H1 (cell line): ENCODE measurements at regions of chr15 and their contacts with region 1.

Region 1: DNA sequence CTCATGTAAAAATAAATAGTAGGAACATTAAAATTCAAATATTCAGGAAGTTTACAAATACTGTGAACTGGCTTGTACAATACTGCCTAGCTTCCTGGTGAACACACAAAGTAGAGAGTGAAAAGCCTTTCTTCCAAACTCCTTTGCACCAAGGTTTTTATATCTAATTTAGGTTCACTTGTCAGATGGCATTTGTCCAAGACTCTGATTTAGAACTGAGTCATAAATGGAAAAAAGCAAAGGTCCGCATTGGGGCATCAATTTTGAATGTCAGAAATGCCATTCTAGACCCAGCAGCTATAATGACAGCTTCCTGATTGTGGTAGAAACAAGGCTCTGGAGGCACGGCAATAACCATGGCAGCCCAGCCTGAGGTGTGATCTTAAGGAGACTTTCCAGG is 160.7 kb downstream of the PDE8A start:
- DNase-seq: no peak
- H3K4me3 ChIP-seq: no peak overlapping the region
- H3K27ac ChIP-seq: no peak overlapping the region
- H3K4me1 ChIP-seq: peaks cover 0 to 4% (median 0%) of the 10 kb centered on the region in 4 experiments; a peak in 1 of 7 replicates
- H3K27me3 ChIP-seq: no peaks in the 10 kb centered on the region
- CTCF ChIP-seq: no peak
- EP300 ChIP-seq: no peak
- POLR2A ChIP-seq: no peak
- RAD21 ChIP-seq: no peak

Region 2: GRCh38 chr15:85168642-85169173 is 26.4 kb after region 1 on chr15:
- CTCF ChIA-PET with region 1: interaction called, 10 read pairs
- POLR2A ChIA-PET with region 1: no interaction called
- DNase-seq: peak; percentile 72 to 82
- H3K4me3 ChIP-seq: peak overlapping the region; percentile 28 to 55 (median 36); a peak in 6 of 8 replicates
- H3K27ac ChIP-seq: no peak overlapping the region
- H3K4me1 ChIP-seq: no peaks in the 10 kb centered on the region
- H3K27me3 ChIP-seq: no peaks in the 10 kb centered on the region
- CTCF ChIP-seq: peak; percentile 39 to 56 (median 48)
- EP300 ChIP-seq: no peak
- POLR2A ChIP-seq: no peak
- RAD21 ChIP-seq: peak; percentile 62 to 67

Region 3: GRCh38 chr15:85179700-85180099 is 37.4 kb after region 1 on chr15:
- CTCF ChIA-PET with region 1: no interaction called
- POLR2A ChIA-PET with region 1: no interaction called
- DNase-seq: no peak
- H3K4me3 ChIP-seq: no peak overlapping the region
- H3K27ac ChIP-seq: no peak overlapping the region
- H3K4me1 ChIP-seq: no peaks in the 10 kb centered on the region
- H3K27me3 ChIP-seq: no peaks in the 10 kb centered on the region
- CTCF ChIP-seq: no peak
- EP300 ChIP-seq: no peak
- POLR2A ChIP-seq: no peak
- RAD21 ChIP-seq: no peak